ENCODE measurements at regions of chr2 and their contacts with region 1.

Region 1: GRCh38 chr2:127810619-127811396 is at the start of gene WDR33:
- DNase-seq: peak; percentile 91
- H3K4me3 ChIP-seq: peak within 1 kb of the TSS; percentile 77 to 91 (median 86)
- H3K27ac ChIP-seq: peak within 1 kb of the TSS; percentile 89
- H3K4me1 ChIP-seq: peaks cover 14% of the 10 kb centered on the region
- H3K27me3 ChIP-seq: no peaks in the 10 kb centered on the region
- CTCF ChIP-seq: peak in 1 of 2 donors; percentile 47
- total RNA-seq, gene WDR33: 31.5 to 43.7 TPM

Region 2: GRCh38 chr2:127526149-127527000 is 284.4 kb before region 1 on chr2 and contains the start of gene IWS1:
- CTCF ChIA-PET with region 1: no interaction called
- dilution Hi-C with region 1: no loop called
- in situ Hi-C with region 1: no loop called
- intact Hi-C with region 1: loop called (anchors 1 kb)
- DNase-seq: peak; percentile 94
- H3K4me3 ChIP-seq: peak within 1 kb of the TSS; percentile 64 to 95 (median 67)
- H3K27ac ChIP-seq: peak within 1 kb of the TSS; percentile 98
- H3K4me1 ChIP-seq: peaks cover 16% of the 10 kb centered on the region
- H3K27me3 ChIP-seq: no peaks in the 10 kb centered on the region
- CTCF ChIP-seq: peak in 1 of 2 donors; percentile 23
- total RNA-seq, gene IWS1: 24.7 to 52.5 TPM

Region 3: DNA sequence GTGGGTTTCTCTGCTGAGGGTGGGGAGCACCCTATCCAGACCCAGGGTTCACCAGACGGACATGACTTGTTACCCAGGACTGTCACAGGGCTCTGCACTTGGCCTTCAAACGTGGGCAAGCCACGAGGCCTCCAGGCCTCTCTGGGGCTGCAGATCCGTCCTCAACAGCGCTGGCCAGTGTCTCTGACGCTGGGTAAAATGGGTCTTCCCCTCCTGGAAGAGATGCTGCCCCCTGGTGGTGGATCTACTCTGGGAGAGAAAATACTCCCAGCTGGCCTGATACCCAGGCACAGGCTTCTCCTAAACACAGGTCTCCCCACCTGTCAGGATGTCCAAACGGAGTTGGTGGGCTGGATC is 161.1 kb before region 1 on chr2:
- CTCF ChIA-PET with region 1: no interaction called
- dilution Hi-C with region 1: no loop called
- in situ Hi-C with region 1: no loop called
- intact Hi-C with region 1: loop called (anchors 1 kb)
- DNase-seq: peak; percentile 64
- H3K4me3 ChIP-seq: no peak overlapping the region
- H3K27ac ChIP-seq: no peak overlapping the region
- H3K4me1 ChIP-seq: peaks cover 4% of the 10 kb centered on the region
- H3K27me3 ChIP-seq: no peaks in the 10 kb centered on the region
- CTCF ChIP-seq: peak; percentile 82 to 90

Region 4: DNA sequence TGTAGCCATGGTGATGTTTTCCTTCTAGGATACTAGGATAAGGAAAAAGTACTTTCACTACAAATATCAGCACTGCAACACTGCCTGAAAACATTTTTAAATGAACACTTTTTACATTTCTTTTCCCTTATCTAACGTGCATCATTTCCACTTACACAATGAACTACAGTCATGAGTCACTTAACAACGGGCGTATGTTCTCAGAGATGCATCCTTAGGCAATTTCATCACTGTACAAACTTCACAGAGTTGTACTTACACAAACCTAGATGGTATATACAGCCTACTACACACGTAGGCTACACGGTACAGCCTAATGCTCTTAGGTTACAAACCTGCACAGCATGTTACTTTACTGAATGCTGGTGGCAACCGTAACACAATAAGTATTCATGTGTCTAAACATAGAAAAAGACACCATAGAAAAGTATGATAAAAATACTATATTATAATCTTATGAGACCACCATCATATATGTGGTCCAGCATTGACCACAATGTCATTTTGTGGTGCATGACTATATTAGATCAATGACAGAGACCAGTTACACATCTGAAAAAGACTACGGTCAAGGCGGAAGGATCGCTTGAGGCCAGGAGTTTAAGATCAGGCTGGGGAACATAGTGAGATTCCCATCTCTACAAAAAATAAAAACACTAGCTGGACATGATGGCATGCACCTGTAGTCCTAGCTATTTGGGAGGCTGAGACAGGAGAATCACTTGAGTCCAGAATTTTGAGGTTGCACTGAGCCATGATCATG is 39.7 kb before region 1 on chr2:
- CTCF ChIA-PET with region 1: no interaction called
- dilution Hi-C with region 1: no loop called
- in situ Hi-C with region 1: no loop called
- intact Hi-C with region 1: loop called (anchors 1 kb)
- DNase-seq: peak; percentile 87
- H3K4me3 ChIP-seq: no peak overlapping the region
- H3K27ac ChIP-seq: peak overlapping the region; percentile 97
- H3K4me1 ChIP-seq: peaks cover 13% of the 10 kb centered on the region
- H3K27me3 ChIP-seq: no peaks in the 10 kb centered on the region
- CTCF ChIP-seq: no peak

Region 5: GRCh38 chr2:128057334-128057733 is 246.5 kb after region 1 on chr2:
- CTCF ChIA-PET with region 1: no interaction called
- dilution Hi-C with region 1: no loop called
- in situ Hi-C with region 1: no loop called
- intact Hi-C with region 1: no loop called
- DNase-seq: no peak
- H3K4me3 ChIP-seq: no peak overlapping the region
- H3K27ac ChIP-seq: no peak overlapping the region
- H3K4me1 ChIP-seq: no peaks in the 10 kb centered on the region
- H3K27me3 ChIP-seq: no peaks in the 10 kb centered on the region
- CTCF ChIP-seq: no peak

Region 6: GRCh38 chr2:128076461-128077106 is 265.8 kb after region 1 on chr2:
- CTCF ChIA-PET with region 1: no interaction called
- dilution Hi-C with region 1: no loop called
- in situ Hi-C with region 1: no loop called
- intact Hi-C with region 1: no loop called
- DNase-seq: no peak
- H3K4me3 ChIP-seq: no peak overlapping the region
- H3K27ac ChIP-seq: no peak overlapping the region
- H3K4me1 ChIP-seq: no peaks in the 10 kb centered on the region
- H3K27me3 ChIP-seq: no peaks in the 10 kb centered on the region
- CTCF ChIP-seq: no peak